ENCODE measurements at regions of chr2 and their contacts with region 1.

Region 1: GRCh38 chr2:200306196-200306930 is at the start of gene SPATS2L:
- DNase-seq: peak; percentile 95
- ATAC-seq: peak; percentile 72
- H3K4me3 ChIP-seq: peak within 1 kb of the TSS; percentile 84 to 94 (median 88)
- H3K27ac ChIP-seq: peak within 1 kb of the TSS; percentile 96
- H3K4me1 ChIP-seq: peaks cover 72% of the 10 kb centered on the region
- H3K27me3 ChIP-seq: no peaks in the 10 kb centered on the region; a peak in 1 of 5 replicates
- CTCF ChIP-seq: no peak
- EP300 ChIP-seq: peak; percentile 60 to 81; a peak in 3 of 4 replicates
- POLR2A ChIP-seq: peak; percentile 82 to 85
- RAD21 ChIP-seq: no peak
- total RNA-seq, gene SPATS2L: 154 and 165 TPM in 2 replicates

Region 2: GRCh38 chr2:200054681-200055468 is 251.5 kb before region 1 on chr2:
- CTCF ChIA-PET with region 1: no interaction called
- POLR2A ChIA-PET with region 1: interaction called, 3 read pairs
- in situ Hi-C with region 1: no loop called
- intact Hi-C with region 1: loop called (anchors 5 kb)
- DNase-seq: peak; percentile 47
- ATAC-seq: peak; percentile 93
- H3K4me3 ChIP-seq: peak overlapping the region in 2 of 3 experiments; percentile 11 to 45; a peak in 1 of 6 replicates
- H3K27ac ChIP-seq: no peak overlapping the region
- H3K4me1 ChIP-seq: peaks cover 12% of the 10 kb centered on the region
- H3K27me3 ChIP-seq: no peaks in the 10 kb centered on the region
- CTCF ChIP-seq: peak; percentile 93
- EP300 ChIP-seq: no peak
- POLR2A ChIP-seq: no peak
- RAD21 ChIP-seq: peak; percentile 80

Region 3: GRCh38 chr2:200127848-200128247 is 178.5 kb before region 1 on chr2:
- CTCF ChIA-PET with region 1: no interaction called
- POLR2A ChIA-PET with region 1: interaction called, 5 read pairs
- in situ Hi-C with region 1: no loop called
- intact Hi-C with region 1: loop called (anchors 5 kb)
- DNase-seq: peak; percentile 68
- ATAC-seq: peak; percentile 70
- H3K4me3 ChIP-seq: no peak overlapping the region
- H3K27ac ChIP-seq: no peak overlapping the region
- H3K4me1 ChIP-seq: peaks cover 70% of the 10 kb centered on the region
- H3K27me3 ChIP-seq: no peaks in the 10 kb centered on the region
- CTCF ChIP-seq: no peak
- EP300 ChIP-seq: no peak
- POLR2A ChIP-seq: no peak
- RAD21 ChIP-seq: no peak

Region 4: DNA sequence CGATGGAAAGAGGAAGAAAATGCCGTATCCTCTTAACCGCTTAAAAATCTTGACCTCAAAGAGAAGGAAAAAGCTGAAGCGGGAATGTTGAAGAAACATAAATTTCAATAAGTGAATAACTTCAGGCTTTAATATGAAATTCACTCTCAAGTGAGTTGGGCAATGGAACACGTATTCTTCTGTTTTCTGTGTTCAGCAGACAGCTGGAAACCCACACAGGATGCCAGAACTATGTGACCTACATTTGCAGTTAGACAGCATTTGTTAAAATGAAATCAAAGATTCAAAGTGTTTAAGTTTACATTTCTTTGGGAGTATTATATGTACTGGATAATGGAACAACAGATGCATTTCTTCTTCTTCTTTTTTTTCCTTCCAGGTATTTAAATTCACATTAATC is 80.4 kb before region 1 on chr2:
- CTCF ChIA-PET with region 1: no interaction called
- POLR2A ChIA-PET with region 1: interaction called, 35 read pairs
- in situ Hi-C with region 1: loop called (anchors 5 kb)
- intact Hi-C with region 1: loop called (anchors 1 kb)
- DNase-seq: no peak
- ATAC-seq: no peak
- H3K4me3 ChIP-seq: no peak overlapping the region
- H3K27ac ChIP-seq: no peak overlapping the region
- H3K4me1 ChIP-seq: peaks cover 41% of the 10 kb centered on the region
- H3K27me3 ChIP-seq: no peaks in the 10 kb centered on the region
- CTCF ChIP-seq: no peak
- EP300 ChIP-seq: no peak
- POLR2A ChIP-seq: no peak
- RAD21 ChIP-seq: no peak

Region 5: GRCh38 chr2:200405599-200406298 is 99.4 kb after region 1 on chr2:
- CTCF ChIA-PET with region 1: no interaction called
- POLR2A ChIA-PET with region 1: interaction called, 47 read pairs
- in situ Hi-C with region 1: loop called (anchors 5 kb)
- intact Hi-C with region 1: loop called (anchors 1 kb)
- DNase-seq: peak; percentile 99
- ATAC-seq: peak; percentile 98
- H3K4me3 ChIP-seq: peak overlapping the region in 2 of 3 experiments; percentile 28 to 42; a peak in 2 of 6 replicates
- H3K27ac ChIP-seq: peak overlapping the region; percentile 98
- H3K4me1 ChIP-seq: peaks cover 83% of the 10 kb centered on the region
- H3K27me3 ChIP-seq: no peaks in the 10 kb centered on the region
- CTCF ChIP-seq: no peak
- EP300 ChIP-seq: peak in 1 of 2 experiments; percentile 98; a peak in 2 of 4 replicates
- POLR2A ChIP-seq: peak in 1 of 2 experiments; percentile 27; a peak in 1 of 4 replicates
- RAD21 ChIP-seq: peak; percentile 7; the same call in 1 of the 2 replicates

Region 6: DNA sequence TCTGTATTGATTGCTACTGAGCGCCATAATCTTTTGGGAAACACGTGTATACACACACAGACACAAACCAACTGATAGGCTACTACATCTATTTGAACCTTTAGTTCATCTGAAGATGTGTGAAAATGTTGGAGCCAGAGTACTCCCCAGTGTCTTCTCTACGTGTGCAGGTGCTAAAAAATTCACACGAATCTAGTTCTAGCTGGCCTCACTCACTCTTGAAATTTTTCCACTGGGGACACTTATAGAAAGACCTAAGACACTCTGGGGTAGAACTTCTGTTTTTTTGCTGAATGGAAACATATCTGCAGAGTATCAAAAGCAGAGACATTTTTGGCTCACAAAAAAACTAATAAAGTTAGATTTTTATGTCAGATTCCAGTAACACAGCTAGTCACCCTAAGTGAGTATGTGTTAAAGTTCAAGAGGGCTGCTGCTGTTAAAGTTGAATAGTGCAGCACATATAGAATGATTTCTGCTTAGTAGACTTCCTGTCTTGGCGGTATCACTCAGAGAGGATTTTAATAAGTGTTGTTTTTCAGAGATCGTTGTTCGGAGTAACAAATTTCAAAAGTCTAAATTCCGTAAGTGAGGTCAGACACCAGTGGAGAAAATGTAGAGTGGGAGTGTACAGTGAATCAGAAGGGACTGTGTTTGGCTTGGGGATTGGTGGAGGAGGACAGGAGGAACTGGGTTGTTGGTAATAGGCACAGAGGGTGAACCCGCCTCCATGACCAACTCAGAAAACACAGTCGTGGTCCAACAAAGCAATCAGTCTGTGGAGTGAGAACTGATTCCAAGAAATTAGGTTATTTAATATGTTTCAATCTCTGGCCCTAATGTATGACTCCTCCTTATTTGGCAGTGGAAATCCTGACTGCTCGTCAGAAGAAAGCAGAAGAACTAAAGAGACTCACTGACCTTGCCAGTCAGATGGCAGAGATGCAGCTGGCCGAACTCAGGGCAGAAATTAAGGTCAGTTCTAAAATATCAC is 160.4 kb after region 1 on chr2:
- CTCF ChIA-PET with region 1: no interaction called
- POLR2A ChIA-PET with region 1: no interaction called
- in situ Hi-C with region 1: no loop called
- intact Hi-C with region 1: no loop called
- DNase-seq: no peak
- ATAC-seq: no peak
- H3K4me3 ChIP-seq: no peak overlapping the region
- H3K27ac ChIP-seq: no peak overlapping the region
- H3K4me1 ChIP-seq: no peaks in the 10 kb centered on the region
- H3K27me3 ChIP-seq: no peaks in the 10 kb centered on the region
- CTCF ChIP-seq: no peak
- EP300 ChIP-seq: no peak
- POLR2A ChIP-seq: no peak
- RAD21 ChIP-seq: no peak